Right cardiac atrium (tissue), 5 donors: ENCODE measurements at regions of chr11 and their contacts with region 1.

Region 1: DNA sequence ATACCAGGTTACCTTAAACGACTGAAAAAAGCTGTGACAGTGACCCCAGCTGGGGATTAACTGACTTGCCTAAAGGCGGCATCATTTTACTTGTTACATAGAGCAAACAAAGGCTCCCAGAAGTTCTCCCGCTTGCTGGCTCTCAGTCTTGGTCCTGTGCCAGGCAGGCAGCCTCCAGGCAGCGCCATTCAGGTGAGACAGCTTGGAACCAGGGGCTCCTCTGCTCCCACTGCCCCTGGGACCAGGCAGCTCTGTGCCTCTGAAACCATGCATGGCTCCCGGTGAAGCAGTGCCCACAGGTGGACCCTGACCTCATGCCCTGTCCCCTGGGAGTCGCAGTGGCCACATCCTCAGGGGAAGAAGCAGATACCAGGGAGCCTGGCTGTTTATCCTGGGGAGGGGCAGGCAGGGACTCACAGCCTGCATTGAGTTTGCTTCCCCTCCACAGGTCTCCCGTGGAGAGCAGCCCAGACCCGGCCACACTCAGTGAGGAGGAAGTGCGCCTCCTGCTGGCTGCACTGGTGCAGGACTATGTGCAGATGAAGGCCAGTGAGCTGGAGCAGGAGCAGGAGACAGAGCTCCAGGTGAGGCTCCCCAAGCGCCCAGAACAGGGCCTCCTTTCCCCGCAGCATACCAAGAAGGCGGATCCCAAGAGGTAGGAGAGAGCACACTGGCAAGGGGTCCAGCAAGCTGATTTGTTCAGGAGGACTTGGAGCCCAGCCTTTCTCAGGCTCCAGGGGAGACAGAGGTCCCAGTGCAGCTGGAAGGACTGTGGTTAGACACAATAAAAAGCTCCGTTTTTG is 15.6 kb upstream of the CYP2R1 start:
- DNase-seq: peak; percentile 77 to 94 (median 90)
- ATAC-seq: peak; percentile 66 to 83
- H3K4me3 ChIP-seq: no peak overlapping the region
- H3K27ac ChIP-seq: no peak overlapping the region
- H3K4me1 ChIP-seq: no peaks in the 10 kb centered on the region
- H3K27me3 ChIP-seq: no peaks in the 10 kb centered on the region

Region 2: DNA sequence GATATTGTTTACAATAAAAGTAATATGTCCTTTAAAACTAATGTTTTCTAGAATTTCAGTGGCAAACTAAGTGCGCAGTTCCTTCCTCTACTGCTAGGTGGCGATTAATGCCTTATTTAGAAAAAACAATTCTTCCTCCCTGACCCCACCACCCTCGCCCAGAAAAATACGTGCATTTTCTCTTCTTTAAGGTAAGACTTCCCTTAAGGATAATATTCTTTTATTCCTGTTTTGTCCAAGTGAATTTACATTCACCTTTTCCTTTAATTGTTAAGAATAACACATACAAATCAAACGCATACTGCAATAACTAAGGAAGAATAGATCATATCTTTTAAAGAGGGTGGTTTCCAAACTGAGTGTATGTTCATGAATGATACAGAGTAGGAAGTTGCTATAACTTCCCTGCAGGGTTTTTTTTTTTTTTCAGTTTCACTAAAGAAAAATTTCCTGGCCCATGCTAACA is 370.4 kb before region 1 on chr11:
- intact Hi-C with region 1: loop called (anchors 5 kb)
- DNase-seq: no peak
- ATAC-seq: no peak
- H3K4me3 ChIP-seq: no peak overlapping the region
- H3K27ac ChIP-seq: no peak overlapping the region
- H3K4me1 ChIP-seq: peaks cover 4% of the 10 kb centered on the region
- H3K27me3 ChIP-seq: no peaks in the 10 kb centered on the region

Region 3: DNA sequence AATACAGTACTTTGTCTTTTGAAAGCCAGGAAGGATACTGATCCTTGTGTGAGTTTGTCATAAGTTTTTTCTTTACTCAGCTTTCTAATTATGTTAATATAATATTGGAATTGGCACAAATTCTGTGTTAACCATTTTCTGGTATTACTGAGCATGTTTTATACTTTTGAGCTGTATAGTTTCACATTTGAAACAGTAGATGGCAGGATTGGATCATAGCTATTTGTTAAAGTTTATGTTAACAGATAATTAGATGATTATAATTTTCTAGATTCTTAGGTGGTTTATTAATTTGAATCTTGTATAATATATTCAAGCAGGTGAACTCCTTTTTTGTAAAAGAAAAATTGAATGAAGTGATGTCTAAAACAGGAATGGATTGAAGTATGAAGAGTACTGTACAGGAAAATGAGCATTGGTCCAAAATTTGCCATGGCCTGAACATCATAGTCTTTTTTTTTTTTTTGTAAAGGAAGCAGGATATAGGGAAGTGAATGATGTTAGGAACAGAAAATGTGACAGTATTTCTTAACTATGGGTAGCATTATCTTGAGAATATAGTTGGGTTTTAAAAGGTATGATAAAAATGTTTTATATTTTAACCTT is 117.6 kb before region 1 on chr11:
- intact Hi-C with region 1: loop called in 3 of 4 experiments (anchors 5 to 10 kb)
- DNase-seq: no peak
- ATAC-seq: no peak
- H3K4me3 ChIP-seq: no peak overlapping the region
- H3K27ac ChIP-seq: no peak overlapping the region
- H3K4me1 ChIP-seq: no peaks in the 10 kb centered on the region
- H3K27me3 ChIP-seq: no peaks in the 10 kb centered on the region

Region 4: DNA sequence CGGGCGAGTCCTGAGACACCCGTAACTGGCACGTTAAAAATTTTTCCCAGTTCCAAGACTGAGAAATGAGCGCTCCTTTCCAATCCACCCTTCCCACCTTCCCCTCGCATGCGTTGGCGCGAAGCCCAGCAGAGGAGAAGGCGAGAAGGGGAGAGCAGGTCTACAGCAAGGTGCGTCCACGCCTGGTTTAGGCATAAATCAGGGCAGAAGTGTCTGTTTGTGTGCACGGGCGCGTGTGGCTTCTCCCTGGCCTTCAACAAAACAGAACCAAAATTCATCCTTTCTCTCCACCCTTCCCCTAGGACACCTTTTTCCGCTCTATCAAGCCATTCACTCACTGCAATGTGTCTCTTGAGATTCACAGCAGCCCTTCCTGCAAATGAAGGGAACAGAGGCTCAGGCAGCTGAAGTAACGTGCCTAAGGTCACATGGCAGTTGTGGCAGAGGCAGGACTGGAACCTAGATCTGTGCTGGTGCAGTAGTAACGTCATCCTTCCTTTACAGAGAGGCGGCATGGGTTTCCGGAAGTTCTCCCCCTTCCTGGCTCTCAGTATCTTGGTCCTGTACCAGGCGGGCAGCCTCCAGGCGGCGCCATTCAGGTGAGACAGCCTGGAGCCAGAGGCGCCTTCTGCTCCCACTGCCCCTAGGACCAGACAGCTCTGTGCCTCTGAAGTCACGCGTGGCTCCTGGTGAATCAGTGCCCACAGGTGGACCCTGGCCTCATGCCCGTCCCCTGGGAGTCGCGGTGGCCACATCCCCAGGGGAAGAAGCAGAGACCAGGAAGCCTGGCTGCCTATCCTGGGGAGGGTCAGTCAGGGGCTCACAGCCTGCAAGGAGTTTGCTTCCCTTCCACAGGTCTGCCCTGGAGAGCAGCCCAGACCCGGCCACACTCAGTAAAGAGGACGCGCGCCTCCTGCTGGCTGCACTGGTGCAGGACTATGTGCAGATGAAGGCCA is 166.9 kb after region 1 on chr11:
- intact Hi-C with region 1: loop called in 3 of 4 experiments (anchors 1 to 10 kb)
- DNase-seq: peak; percentile 82 to 95 (median 92)
- ATAC-seq: peak; percentile 90 to 93
- H3K4me3 ChIP-seq: peak overlapping the region; percentile 31
- H3K27ac ChIP-seq: no peak overlapping the region
- H3K4me1 ChIP-seq: no peaks in the 10 kb centered on the region
- H3K27me3 ChIP-seq: peaks cover 4% of the 10 kb centered on the region

Region 5: GRCh38 chr11:15123849-15124248 is 216.2 kb after region 1 on chr11:
- intact Hi-C with region 1: no loop called
- DNase-seq: no peak
- ATAC-seq: no peak
- H3K4me3 ChIP-seq: no peak overlapping the region
- H3K27ac ChIP-seq: no peak overlapping the region
- H3K4me1 ChIP-seq: peaks cover 4% of the 10 kb centered on the region
- H3K27me3 ChIP-seq: no peaks in the 10 kb centered on the region

Region 6: GRCh38 chr11:15208378-15209222 is 301.0 kb after region 1 on chr11:
- intact Hi-C with region 1: loop called in 1 of 4 experiments (anchors 10 kb)
- DNase-seq: peak; percentile 62 to 84 (median 83)
- ATAC-seq: peak; percentile 85 to 92
- H3K4me3 ChIP-seq: no peak overlapping the region
- H3K27ac ChIP-seq: no peak overlapping the region
- H3K4me1 ChIP-seq: no peaks in the 10 kb centered on the region
- H3K27me3 ChIP-seq: no peaks in the 10 kb centered on the region

Region 7: DNA sequence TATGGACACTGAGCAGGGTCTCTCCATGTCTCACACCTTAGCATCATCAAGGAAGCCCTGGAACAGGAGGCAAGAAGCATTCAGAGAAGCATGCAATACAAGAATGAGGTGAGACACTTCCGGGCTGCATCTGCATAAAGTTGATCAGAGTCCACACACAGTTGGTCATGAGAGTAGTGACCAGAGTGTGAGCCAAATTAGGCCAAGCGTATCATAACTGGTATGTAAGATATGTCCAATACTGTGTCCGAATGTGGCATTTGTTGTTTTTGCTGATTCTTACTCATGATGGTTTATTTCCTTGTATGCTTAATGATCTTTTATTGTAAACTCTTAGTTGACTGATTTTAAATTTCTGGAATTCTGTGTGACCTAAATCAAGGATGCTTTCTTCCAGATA is 522.8 kb after region 1 on chr11:
- intact Hi-C with region 1: no loop called
- DNase-seq: no peak
- ATAC-seq: no peak
- H3K4me3 ChIP-seq: no peak overlapping the region
- H3K27ac ChIP-seq: no peak overlapping the region
- H3K4me1 ChIP-seq: no peaks in the 10 kb centered on the region
- H3K27me3 ChIP-seq: no peaks in the 10 kb centered on the region